ENCODE measurements at regions of chr1 and their contacts with region 1.

Region 1: DNA sequence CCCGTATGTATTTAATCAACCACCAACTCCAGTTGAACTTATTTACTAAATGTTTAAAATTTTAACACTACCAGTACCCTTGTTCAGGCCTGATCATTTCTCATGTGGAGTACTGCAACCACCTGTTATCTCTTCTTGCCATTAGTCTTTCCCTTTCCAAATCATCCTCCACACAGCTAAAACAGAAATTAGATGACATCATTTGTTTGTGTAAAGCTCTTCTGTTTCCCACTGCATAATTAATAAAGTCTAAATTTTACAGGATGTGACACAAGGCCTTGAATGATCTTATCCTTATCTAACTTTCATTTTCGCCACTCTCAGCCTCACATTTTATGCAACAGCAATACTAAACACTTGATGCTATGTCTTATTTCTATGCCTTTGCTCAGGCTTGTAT is 24.4 kb downstream of the GDAP2 start:
- DNase-seq: no peak
- ATAC-seq: no peak
- H3K4me3 ChIP-seq: no peak overlapping the region
- H3K4me3 Mint-ChIP-seq: no peak overlapping the region
- H3K27ac ChIP-seq: no peak overlapping the region
- H3K27ac Mint-ChIP-seq: no peak overlapping the region
- H3K4me1 ChIP-seq: no peaks in the 10 kb centered on the region
- H3K4me1 Mint-ChIP-seq: no peaks in the 10 kb centered on the region
- H3K27me3 ChIP-seq: no peaks in the 10 kb centered on the region
- H3K27me3 Mint-ChIP-seq: no peaks in the 10 kb centered on the region
- CTCF ChIP-seq: no peak

Region 2: GRCh38 chr1:117871013-117871412 is 34.0 kb before region 1 on chr1:
- CTCF ChIA-PET with region 1: no interaction called
- POLR2A ChIA-PET with region 1: no interaction called
- intact Hi-C with region 1: no loop called
- DNase-seq: no peak
- ATAC-seq: no peak
- H3K4me3 ChIP-seq: no peak overlapping the region
- H3K4me3 Mint-ChIP-seq: no peak overlapping the region
- H3K27ac ChIP-seq: no peak overlapping the region
- H3K27ac Mint-ChIP-seq: no peak overlapping the region
- H3K4me1 ChIP-seq: no peaks in the 10 kb centered on the region
- H3K4me1 Mint-ChIP-seq: no peaks in the 10 kb centered on the region
- H3K27me3 ChIP-seq: no peaks in the 10 kb centered on the region
- H3K27me3 Mint-ChIP-seq: no peaks in the 10 kb centered on the region
- CTCF ChIP-seq: no peak

Region 3: DNA sequence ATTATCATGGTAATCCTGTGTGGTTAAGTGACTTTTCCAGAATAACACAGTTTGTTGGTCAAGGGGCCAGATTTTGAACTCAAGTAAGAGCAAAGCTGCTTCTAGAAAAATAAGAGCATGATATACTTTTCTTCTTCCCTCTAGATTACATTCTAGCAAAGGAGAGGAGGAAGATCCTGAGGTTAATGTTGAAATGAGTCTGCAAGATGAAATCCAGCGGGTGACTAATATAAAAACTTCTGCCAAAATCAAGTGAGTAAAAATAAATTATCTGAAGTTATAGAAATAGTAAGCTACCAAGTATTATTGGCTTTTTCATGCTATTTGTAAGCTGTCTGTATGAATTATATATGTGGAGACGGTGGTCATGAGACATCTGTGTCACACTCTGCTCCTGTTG is 37.3 kb after region 1 on chr1:
- CTCF ChIA-PET with region 1: no interaction called
- POLR2A ChIA-PET with region 1: no interaction called
- intact Hi-C with region 1: loop called in 1 of 2 experiments (anchors 5 kb)
- DNase-seq: no peak
- ATAC-seq: no peak
- H3K4me3 ChIP-seq: no peak overlapping the region
- H3K4me3 Mint-ChIP-seq: no peak overlapping the region
- H3K27ac ChIP-seq: no peak overlapping the region
- H3K27ac Mint-ChIP-seq: no peak overlapping the region
- H3K4me1 ChIP-seq: no peaks in the 10 kb centered on the region
- H3K4me1 Mint-ChIP-seq: peaks cover 3% of the 10 kb centered on the region
- H3K27me3 ChIP-seq: no peaks in the 10 kb centered on the region
- H3K27me3 Mint-ChIP-seq: no peaks in the 10 kb centered on the region
- CTCF ChIP-seq: no peak

Region 4: GRCh38 chr1:118101515-118101844 is 196.5 kb after region 1 on chr1:
- CTCF ChIA-PET with region 1: no interaction called
- POLR2A ChIA-PET with region 1: no interaction called
- intact Hi-C with region 1: no loop called
- DNase-seq: no peak
- ATAC-seq: no peak
- H3K4me3 ChIP-seq: no peak overlapping the region
- H3K4me3 Mint-ChIP-seq: no peak overlapping the region
- H3K27ac ChIP-seq: no peak overlapping the region
- H3K27ac Mint-ChIP-seq: no peak overlapping the region
- H3K4me1 ChIP-seq: no peaks in the 10 kb centered on the region
- H3K4me1 Mint-ChIP-seq: no peaks in the 10 kb centered on the region
- H3K27me3 ChIP-seq: peaks cover 0 to 2% of the 10 kb centered on the region in 2 experiments
- H3K27me3 Mint-ChIP-seq: peaks cover 2% of the 10 kb centered on the region
- CTCF ChIP-seq: no peak